Naive thymus-derived CD4-positive, alpha-beta T cell (primary cell): ENCODE measurements at regions of chr3 and their contacts with region 1.

Region 1: GRCh38 chr3:146621723-146622122 is 16.6 kb upstream of the PLSCR5 start:
- DNase-seq: no peak
- ATAC-seq: no peak
- H3K4me3 ChIP-seq: no peak overlapping the region
- H3K4me3 Mint-ChIP-seq: no peak overlapping the region
- H3K27ac ChIP-seq: no peak overlapping the region
- H3K27ac Mint-ChIP-seq: no peak overlapping the region
- H3K4me1 ChIP-seq: no peaks in the 10 kb centered on the region
- H3K4me1 Mint-ChIP-seq: peaks cover 3 to 11% (median 8%) of the 10 kb centered on the region in 7 donors
- H3K27me3 ChIP-seq: peaks cover 0 to 3% of the 10 kb centered on the region in 2 donors
- H3K27me3 Mint-ChIP-seq: peaks cover 0 to 11% (median 0%) of the 10 kb centered on the region in 5 donors

Region 2: GRCh38 chr3:146611096-146611495 is 10.6 kb before region 1 on chr3:
- CTCF ChIA-PET with region 1: no interaction called
- POLR2A ChIA-PET with region 1: no interaction called
- intact Hi-C with region 1: loop called in 1 of 2 experiments (anchors 1 kb)
- DNase-seq: no peak
- ATAC-seq: no peak
- H3K4me3 ChIP-seq: no peak overlapping the region
- H3K4me3 Mint-ChIP-seq: no peak overlapping the region
- H3K27ac ChIP-seq: no peak overlapping the region
- H3K27ac Mint-ChIP-seq: no peak overlapping the region
- H3K4me1 ChIP-seq: no peaks in the 10 kb centered on the region
- H3K4me1 Mint-ChIP-seq: no peaks in the 10 kb centered on the region
- H3K27me3 ChIP-seq: no peaks in the 10 kb centered on the region
- H3K27me3 Mint-ChIP-seq: peaks cover 4 to 25% (median 9%) of the 10 kb centered on the region in 5 donors